Endothelial cell of umbilical vein (primary cell): ENCODE measurements at regions of chr1 and their contacts with region 1.

Region 1: DNA sequence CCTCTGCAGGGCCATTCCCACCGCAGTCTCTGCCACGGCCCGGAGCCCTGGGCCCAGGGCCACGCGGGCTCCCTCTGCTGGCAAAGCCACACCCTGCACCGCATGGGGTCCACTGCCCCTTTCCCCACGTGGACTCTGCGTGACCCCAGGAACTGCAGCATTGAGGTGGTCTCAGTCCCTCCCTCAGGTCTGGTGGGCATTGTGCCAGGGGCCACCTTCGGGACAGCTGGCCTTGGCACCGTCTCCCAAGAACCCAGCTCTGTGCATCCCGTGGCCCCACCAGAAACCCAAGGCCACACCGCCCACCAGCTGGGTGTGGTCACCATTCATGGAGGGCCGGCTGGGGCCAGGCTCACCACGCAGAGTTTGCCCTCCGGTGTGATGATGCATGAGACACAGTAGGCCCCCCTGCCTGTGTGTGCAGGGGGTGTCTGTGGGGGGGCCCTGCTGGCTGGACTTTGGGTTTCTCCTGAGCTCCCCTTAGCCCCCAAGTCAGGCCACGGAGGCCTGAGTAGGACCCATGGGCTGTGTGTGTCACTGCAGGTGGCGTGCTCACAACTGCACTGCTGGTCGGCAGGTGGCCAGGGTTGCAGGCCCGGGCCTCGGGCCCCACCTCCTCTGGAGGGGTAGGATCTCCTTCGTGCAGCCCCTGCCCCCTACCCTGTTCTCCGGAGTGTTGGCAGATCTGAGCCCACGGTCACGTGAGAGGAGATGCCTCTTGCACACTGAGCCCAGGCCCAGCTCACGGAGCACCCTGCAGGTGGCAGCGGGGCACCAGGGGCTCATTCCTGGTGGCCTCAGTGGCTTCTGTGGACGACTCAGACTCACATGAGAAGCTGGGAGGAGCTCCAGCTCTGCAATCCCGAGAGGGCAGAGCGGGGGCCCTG is 5.8 kb downstream of the VWA1 start:
- DNase-seq: peak; percentile 37
- H3K4me3 ChIP-seq: no peak overlapping the region
- H3K27ac ChIP-seq: no peak overlapping the region
- H3K4me1 ChIP-seq: no peaks in the 10 kb centered on the region
- H3K27me3 ChIP-seq: no peaks in the 10 kb centered on the region
- CTCF ChIP-seq: peak; percentile 86 to 99
- POLR2A ChIP-seq: no peak

Region 2: GRCh38 chr1:951364-951763 is 489.9 kb before region 1 on chr1:
- CTCF ChIA-PET with region 1: no interaction called
- POLR2A ChIA-PET with region 1: no interaction called
- dilution Hi-C with region 1: no loop called
- intact Hi-C with region 1: no loop called
- DNase-seq: no peak
- H3K4me3 ChIP-seq: no peak overlapping the region
- H3K27ac ChIP-seq: no peak overlapping the region
- H3K4me1 ChIP-seq: no peaks in the 10 kb centered on the region
- H3K27me3 ChIP-seq: no peaks in the 10 kb centered on the region
- CTCF ChIP-seq: peak; percentile 20 to 52
- POLR2A ChIP-seq: no peak

Region 3: GRCh38 chr1:1406817-1407635 is 34.2 kb before region 1 on chr1 and contains the start of gene MRPL20:
- CTCF ChIA-PET with region 1: interaction called, 26 read pairs
- POLR2A ChIA-PET with region 1: no interaction called
- dilution Hi-C with region 1: no loop called
- intact Hi-C with region 1: loop called (anchors 1 kb)
- DNase-seq: peak; percentile 88
- H3K4me3 ChIP-seq: peak within 1 kb of the TSS; percentile 73 to 87 (median 86)
- H3K27ac ChIP-seq: peak within 1 kb of the TSS; percentile 54
- H3K4me1 ChIP-seq: peaks cover 11% of the 10 kb centered on the region
- H3K27me3 ChIP-seq: no peaks in the 10 kb centered on the region
- CTCF ChIP-seq: no peak
- POLR2A ChIP-seq: peak; percentile 89
- total RNA-seq, gene MRPL20: 125 and 134 TPM in 2 replicates

Region 4: GRCh38 chr1:1419642-1420384 is 21.4 kb before region 1 on chr1:
- CTCF ChIA-PET with region 1: interaction called, 11 read pairs
- POLR2A ChIA-PET with region 1: no interaction called
- dilution Hi-C with region 1: no loop called
- intact Hi-C with region 1: no loop called
- DNase-seq: no peak
- H3K4me3 ChIP-seq: peak overlapping the region in 1 of 3 experiments; percentile 21
- H3K27ac ChIP-seq: no peak overlapping the region
- H3K4me1 ChIP-seq: peaks cover 3% of the 10 kb centered on the region
- H3K27me3 ChIP-seq: no peaks in the 10 kb centered on the region
- CTCF ChIP-seq: no peak
- POLR2A ChIP-seq: no peak

Region 5: GRCh38 chr1:1430114-1430982 is 10.9 kb before region 1 on chr1:
- CTCF ChIA-PET with region 1: interaction called, 13 read pairs
- POLR2A ChIA-PET with region 1: no interaction called
- dilution Hi-C with region 1: no loop called
- intact Hi-C with region 1: no loop called
- DNase-seq: peak; percentile 91
- H3K4me3 ChIP-seq: no peak overlapping the region
- H3K27ac ChIP-seq: peak overlapping the region; percentile 43
- H3K4me1 ChIP-seq: peaks cover 17% of the 10 kb centered on the region
- H3K27me3 ChIP-seq: no peaks in the 10 kb centered on the region
- CTCF ChIP-seq: peak; percentile 29 to 51
- POLR2A ChIP-seq: no peak

Region 6: GRCh38 chr1:1477206-1477605 is 36.0 kb after region 1 on chr1:
- CTCF ChIA-PET with region 1: no interaction called
- POLR2A ChIA-PET with region 1: no interaction called
- dilution Hi-C with region 1: no loop called
- intact Hi-C with region 1: no loop called
- DNase-seq: no peak
- H3K4me3 ChIP-seq: no peak overlapping the region
- H3K27ac ChIP-seq: no peak overlapping the region
- H3K4me1 ChIP-seq: peaks cover 6% of the 10 kb centered on the region
- H3K27me3 ChIP-seq: no peaks in the 10 kb centered on the region
- CTCF ChIP-seq: no peak
- POLR2A ChIP-seq: no peak